CD4-positive, alpha-beta T cell (primary cell): ENCODE measurements at regions of chr4 and their contacts with region 1.

Region 1: DNA sequence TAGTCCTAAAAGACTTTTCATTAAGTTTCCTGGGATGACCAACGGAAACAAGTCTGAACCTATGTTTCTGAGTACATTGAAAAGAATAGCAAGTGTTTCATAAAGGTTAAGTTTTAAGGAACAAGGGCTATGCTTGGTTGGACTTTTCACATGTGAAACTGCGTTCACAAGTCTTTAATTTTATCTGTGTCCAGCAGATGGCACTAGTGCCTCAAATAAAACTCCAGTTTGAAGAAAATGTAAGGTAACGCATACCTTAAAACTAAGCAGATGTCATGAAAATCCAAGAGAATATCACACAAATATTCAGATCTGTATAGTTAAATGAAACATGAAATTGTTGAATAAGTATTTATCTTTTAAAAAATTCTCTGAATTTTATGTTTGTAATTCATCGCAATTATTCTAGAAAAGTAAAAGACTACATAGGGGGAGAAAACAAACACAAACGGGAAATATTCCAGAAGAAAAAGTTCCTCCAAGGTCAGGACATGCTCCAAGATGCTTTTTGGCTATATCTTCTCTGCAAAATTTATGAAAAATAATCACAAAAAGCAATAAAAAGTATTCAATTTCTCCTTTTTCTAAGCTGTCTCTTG is 89.6 kb upstream of the MAD2L1 start:
- DNase-seq: peak in 7 of 14 experiments; percentile 3 to 81 (median 53)
- ATAC-seq: peak; percentile 55
- H3K4me3 ChIP-seq: no peak overlapping the region
- H3K4me3 Mint-ChIP-seq: no peak overlapping the region
- H3K27ac ChIP-seq: no peak overlapping the region
- H3K27ac Mint-ChIP-seq: no peak overlapping the region
- H3K4me1 ChIP-seq: no peaks in the 10 kb centered on the region
- H3K4me1 Mint-ChIP-seq: no peaks in the 10 kb centered on the region
- H3K27me3 ChIP-seq: no peaks in the 10 kb centered on the region
- H3K27me3 Mint-ChIP-seq: peaks cover 12% of the 10 kb centered on the region
- CTCF ChIP-seq: peak; percentile 86

Region 2: DNA sequence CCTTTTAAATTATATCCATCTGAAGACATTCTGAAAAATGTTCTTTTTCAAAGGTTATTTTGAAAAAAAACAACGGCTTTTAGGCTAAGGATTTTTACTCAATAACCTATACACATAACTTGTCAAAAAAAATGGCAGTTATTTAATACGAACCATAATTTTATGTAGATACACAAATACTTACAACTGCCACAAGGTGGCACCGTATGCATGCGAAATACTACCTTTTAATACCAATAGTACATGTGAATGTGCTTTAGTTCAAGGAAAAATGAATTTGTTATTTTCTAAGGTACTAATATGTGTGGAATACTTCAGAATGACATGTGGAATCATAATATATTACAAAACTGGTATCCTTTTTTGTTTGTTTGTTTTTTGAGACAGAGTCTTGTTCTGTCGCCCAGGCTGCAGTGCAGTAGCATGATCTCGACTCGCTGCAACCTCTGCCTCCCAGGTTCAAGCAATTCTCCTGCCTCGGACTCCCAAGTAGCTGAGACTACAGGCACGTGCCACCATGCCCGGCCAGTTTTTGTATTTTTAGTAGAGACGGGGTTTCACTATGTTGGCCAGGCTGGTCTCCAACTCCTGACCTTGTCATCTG is 84.9 kb before region 1 on chr4:
- CTCF ChIA-PET with region 1: no interaction called
- POLR2A ChIA-PET with region 1: no interaction called
- intact Hi-C with region 1: loop called in 1 of 2 experiments (anchors 5 kb)
- DNase-seq: peak in 11 of 14 experiments; percentile 9 to 83 (median 43)
- ATAC-seq: no peak
- H3K4me3 ChIP-seq: no peak overlapping the region
- H3K4me3 Mint-ChIP-seq: no peak overlapping the region
- H3K27ac ChIP-seq: no peak overlapping the region
- H3K27ac Mint-ChIP-seq: no peak overlapping the region
- H3K4me1 ChIP-seq: peaks cover 10% of the 10 kb centered on the region
- H3K4me1 Mint-ChIP-seq: peaks cover 37% of the 10 kb centered on the region
- H3K27me3 ChIP-seq: no peaks in the 10 kb centered on the region
- H3K27me3 Mint-ChIP-seq: no peaks in the 10 kb centered on the region
- CTCF ChIP-seq: peak; percentile 91

Region 3: DNA sequence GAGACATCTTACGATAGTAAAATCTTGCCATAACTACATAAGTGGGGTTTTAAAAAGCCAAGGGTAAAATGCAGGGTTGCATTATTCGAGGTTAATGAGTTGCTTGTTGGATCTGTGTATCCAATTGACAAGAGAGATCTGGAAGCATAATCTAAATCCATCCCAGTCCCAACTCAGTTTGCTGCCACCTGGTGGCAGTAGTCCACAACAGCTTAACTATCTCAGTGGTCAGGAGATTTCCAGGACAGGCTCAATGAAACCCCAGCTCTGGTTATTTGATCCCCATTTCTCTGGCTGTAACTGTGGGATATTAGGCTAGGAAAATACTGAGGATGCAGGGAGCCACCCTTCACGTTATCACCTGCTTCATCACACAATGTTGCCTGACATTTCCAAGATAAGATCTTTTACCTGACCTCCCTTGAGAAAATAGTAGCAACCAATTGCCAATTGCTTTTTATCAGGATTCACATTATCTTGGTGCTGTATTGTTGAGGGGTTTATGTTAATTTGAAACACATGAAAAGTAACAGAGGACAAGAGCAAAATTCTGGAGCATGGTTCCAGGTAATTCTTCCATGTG is 1096.1 kb after region 1 on chr4:
- CTCF ChIA-PET with region 1: no interaction called
- POLR2A ChIA-PET with region 1: no interaction called
- intact Hi-C with region 1: loop called (anchors 2 kb)
- DNase-seq: peak; percentile 21 to 78 (median 44)
- ATAC-seq: peak; percentile 27
- H3K4me3 ChIP-seq: no peak overlapping the region
- H3K4me3 Mint-ChIP-seq: no peak overlapping the region
- H3K27ac ChIP-seq: no peak overlapping the region
- H3K27ac Mint-ChIP-seq: no peak overlapping the region
- H3K4me1 ChIP-seq: peaks cover 35% of the 10 kb centered on the region
- H3K4me1 Mint-ChIP-seq: peaks cover 54% of the 10 kb centered on the region
- H3K27me3 ChIP-seq: no peaks in the 10 kb centered on the region
- H3K27me3 Mint-ChIP-seq: no peaks in the 10 kb centered on the region
- CTCF ChIP-seq: peak; percentile 76

Region 4: GRCh38 chr4:121656269-121656641 is 1500.0 kb after region 1 on chr4:
- CTCF ChIA-PET with region 1: interaction called, 3 read pairs
- POLR2A ChIA-PET with region 1: no interaction called
- intact Hi-C with region 1: loop called in 1 of 2 experiments (anchors 10 kb)
- DNase-seq: peak in 6 of 14 experiments; percentile 0 to 51 (median 16)
- ATAC-seq: no peak
- H3K4me3 ChIP-seq: no peak overlapping the region
- H3K4me3 Mint-ChIP-seq: no peak overlapping the region
- H3K27ac ChIP-seq: no peak overlapping the region
- H3K27ac Mint-ChIP-seq: no peak overlapping the region
- H3K4me1 ChIP-seq: no peaks in the 10 kb centered on the region
- H3K4me1 Mint-ChIP-seq: no peaks in the 10 kb centered on the region
- H3K27me3 ChIP-seq: no peaks in the 10 kb centered on the region
- H3K27me3 Mint-ChIP-seq: no peaks in the 10 kb centered on the region
- CTCF ChIP-seq: no peak

Region 5: GRCh38 chr4:121736735-121737351 is 1580.6 kb after region 1 on chr4:
- CTCF ChIA-PET with region 1: no interaction called
- POLR2A ChIA-PET with region 1: no interaction called
- intact Hi-C with region 1: loop called in 1 of 2 experiments (anchors 2 kb)
- DNase-seq: peak in 4 of 14 experiments; percentile 11 to 35 (median 33)
- ATAC-seq: no peak
- H3K4me3 ChIP-seq: no peak overlapping the region
- H3K4me3 Mint-ChIP-seq: no peak overlapping the region
- H3K27ac ChIP-seq: no peak overlapping the region
- H3K27ac Mint-ChIP-seq: no peak overlapping the region
- H3K4me1 ChIP-seq: no peaks in the 10 kb centered on the region
- H3K4me1 Mint-ChIP-seq: no peaks in the 10 kb centered on the region
- H3K27me3 ChIP-seq: peaks cover 0 to 2% of the 10 kb centered on the region in 2 experiments
- H3K27me3 Mint-ChIP-seq: peaks cover 26% of the 10 kb centered on the region
- CTCF ChIP-seq: peak; percentile 34